ENCODE measurements at regions of chr4 and their contacts with region 1.

Region 1: DNA sequence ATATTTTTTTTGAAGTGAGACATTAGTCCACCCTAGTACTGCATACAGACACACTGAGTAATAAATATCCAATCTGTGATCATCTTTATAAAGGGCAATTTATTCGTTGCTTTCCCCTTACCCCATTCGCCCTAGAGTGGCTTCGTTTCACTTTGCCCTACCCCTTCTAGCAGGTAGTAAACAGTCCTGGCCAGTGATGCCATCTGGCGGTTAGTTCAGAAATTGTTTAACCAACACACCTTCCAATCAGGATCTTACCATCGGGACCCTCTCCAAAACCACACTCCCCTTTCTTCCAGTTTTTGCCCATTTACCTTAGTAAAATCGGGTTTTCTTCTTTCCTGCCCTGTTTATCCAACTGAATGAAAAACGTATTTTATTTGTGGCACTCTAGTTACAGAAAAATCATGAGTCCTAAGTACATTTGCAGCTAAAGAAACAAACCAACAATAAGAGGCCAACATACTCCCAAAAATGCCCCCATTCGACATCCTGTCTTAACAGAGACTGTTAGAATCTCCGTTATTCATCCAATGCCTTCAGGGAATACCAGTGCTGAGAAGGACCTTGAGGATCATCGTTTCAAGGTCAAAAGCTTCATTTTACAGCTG is 2.2 kb downstream of the PPA2 start:
- DNase-seq: peak; percentile 64
- H3K4me3 Mint-ChIP-seq: peak overlapping the region; percentile 78
- H3K27ac Mint-ChIP-seq: no peak overlapping the region
- H3K4me1 Mint-ChIP-seq: peaks cover 49% of the 10 kb centered on the region
- H3K27me3 Mint-ChIP-seq: peaks cover 2% of the 10 kb centered on the region

Region 2: GRCh38 chr4:104860238-104861123 is 611.2 kb before region 1 on chr4:
- intact Hi-C with region 1: loop called (anchors 5 kb)
- DNase-seq: peak; percentile 33
- H3K4me3 Mint-ChIP-seq: no peak overlapping the region
- H3K27ac Mint-ChIP-seq: no peak overlapping the region
- H3K4me1 Mint-ChIP-seq: no peaks in the 10 kb centered on the region
- H3K27me3 Mint-ChIP-seq: peaks cover 14% of the 10 kb centered on the region

Region 3: DNA sequence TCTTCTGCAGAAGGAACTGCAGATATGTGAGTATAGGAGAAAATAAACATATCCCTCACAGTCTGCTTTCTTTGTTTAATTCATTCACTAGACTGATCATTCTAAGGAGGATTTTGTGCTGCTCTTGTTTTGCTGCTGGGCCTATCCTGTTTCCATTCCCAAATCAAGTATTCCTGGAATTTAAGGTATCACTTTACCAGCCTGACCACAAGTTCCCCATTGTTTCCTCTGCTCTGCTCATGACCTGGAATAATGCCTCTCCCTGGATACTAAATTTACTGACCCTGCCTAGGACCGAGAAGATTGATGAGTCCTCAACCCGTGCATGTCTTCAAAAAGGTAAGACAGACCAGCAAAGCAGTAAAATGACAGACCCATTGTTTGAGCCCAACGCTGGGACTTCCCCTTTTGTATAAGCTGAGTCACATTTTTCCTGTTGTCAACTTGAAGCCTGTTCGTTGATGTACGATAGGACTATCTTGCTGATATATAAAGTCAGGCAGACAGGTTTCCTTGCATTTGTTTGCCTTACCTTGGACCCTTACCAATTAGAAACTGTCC is 410.5 kb before region 1 on chr4:
- intact Hi-C with region 1: loop called (anchors 1 kb)
- DNase-seq: peak; percentile 35
- H3K4me3 Mint-ChIP-seq: peak overlapping the region; percentile 17
- H3K27ac Mint-ChIP-seq: peak overlapping the region; percentile 93
- H3K4me1 Mint-ChIP-seq: peaks cover 55% of the 10 kb centered on the region
- H3K27me3 Mint-ChIP-seq: no peaks in the 10 kb centered on the region

Region 4: DNA sequence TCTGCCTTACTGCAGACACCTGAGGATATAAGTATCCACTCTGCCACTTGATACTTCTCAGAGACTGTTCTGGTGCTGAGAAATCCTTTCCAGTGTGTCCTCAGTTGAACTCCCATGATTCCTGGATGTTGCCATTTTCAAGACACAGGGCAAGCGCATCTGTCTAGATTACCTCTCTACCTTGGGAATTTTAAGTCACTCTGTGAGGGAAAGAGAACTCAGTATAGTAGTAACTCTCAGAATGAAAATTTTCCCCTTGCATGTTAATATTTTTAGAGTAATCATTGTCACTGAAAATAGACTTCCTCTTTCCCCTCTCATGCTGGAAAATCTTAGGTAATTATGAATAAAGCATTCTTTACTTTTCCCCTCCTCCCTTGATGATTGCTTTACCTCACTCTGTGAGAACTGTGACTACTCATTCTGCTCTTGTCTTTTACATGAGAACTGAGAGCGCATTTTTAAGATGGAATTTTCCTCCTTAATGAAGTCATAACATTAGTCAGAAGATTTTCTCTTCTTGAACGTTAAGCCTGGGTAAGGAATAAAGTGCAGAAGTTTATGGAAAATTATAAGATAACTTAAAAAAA is 280.0 kb before region 1 on chr4:
- intact Hi-C with region 1: loop called (anchors 1 kb)
- DNase-seq: no peak
- H3K4me3 Mint-ChIP-seq: peak overlapping the region; percentile 8
- H3K27ac Mint-ChIP-seq: peak overlapping the region; percentile 74
- H3K4me1 Mint-ChIP-seq: peaks cover 53% of the 10 kb centered on the region
- H3K27me3 Mint-ChIP-seq: no peaks in the 10 kb centered on the region

Region 5: GRCh38 chr4:105306158-105306781 is 165.4 kb before region 1 on chr4:
- intact Hi-C with region 1: loop called (anchors 1 kb)
- DNase-seq: peak; percentile 60
- H3K4me3 Mint-ChIP-seq: peak overlapping the region; percentile 41
- H3K27ac Mint-ChIP-seq: peak overlapping the region; percentile 92
- H3K4me1 Mint-ChIP-seq: peaks cover 25% of the 10 kb centered on the region
- H3K27me3 Mint-ChIP-seq: no peaks in the 10 kb centered on the region

Region 6: DNA sequence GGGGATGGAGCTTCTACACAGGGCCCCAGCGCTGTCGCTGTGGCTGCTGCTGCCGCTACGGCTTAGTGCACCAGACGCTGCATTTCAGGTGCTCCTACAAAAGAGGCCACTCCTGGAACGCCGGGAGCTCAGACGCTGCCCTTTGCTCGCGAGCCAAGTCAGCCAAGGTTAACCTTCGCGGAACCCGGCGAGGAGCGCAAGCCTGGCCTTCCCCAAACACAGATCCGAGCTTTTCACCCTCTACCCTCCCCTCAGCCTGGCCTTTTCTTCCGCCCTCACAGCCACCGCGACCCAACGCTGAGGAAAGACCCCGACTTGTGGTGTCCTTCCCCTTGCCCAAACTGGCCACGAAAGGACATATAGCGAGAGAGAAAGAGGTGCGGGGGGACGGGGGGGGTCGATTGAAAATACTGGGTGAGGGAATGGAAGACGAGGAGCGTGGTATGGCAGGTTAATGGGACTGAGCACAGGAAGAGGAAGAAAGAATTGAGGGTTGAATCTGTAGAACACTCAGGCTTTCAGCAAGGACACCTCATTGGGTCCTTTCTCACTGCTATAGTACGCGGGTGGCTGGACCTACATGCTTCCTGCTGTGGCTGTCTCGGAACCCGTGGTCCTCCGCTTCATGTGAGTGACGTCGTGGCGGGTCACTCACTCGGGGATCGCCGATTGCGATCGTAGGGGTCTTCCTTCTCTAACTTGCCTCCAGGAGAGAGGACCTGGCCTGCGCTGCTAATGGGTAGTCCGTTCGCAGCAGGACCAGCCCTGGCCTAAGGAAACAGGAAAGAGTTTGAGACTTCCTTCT is 844.5 kb after region 1 on chr4 and contains the starts of genes AIMP1 and TBCK:
- intact Hi-C with region 1: loop called (anchors 1 kb)
- DNase-seq: peak; percentile 83
- H3K4me3 Mint-ChIP-seq: no peak within 1 kb of the TSS
- H3K27ac Mint-ChIP-seq: no peak within 1 kb of the TSS
- H3K4me1 Mint-ChIP-seq: peaks cover 30% of the 10 kb centered on the region
- H3K27me3 Mint-ChIP-seq: no peaks in the 10 kb centered on the region
- total RNA-seq, gene AIMP1: 86.4 and 86.9 TPM in 2 replicates
- total RNA-seq, gene TBCK: 24.4 and 25.1 TPM in 2 replicates

Measured in activated T-helper 1 cell treated with anti-CD3 and anti-CD28 coated beads, Interleukin-12 subunit alpha, Interleukin-12 subunit beta, Interleukin-2, Interleukin-4 antibody, amounts not matched to agents 30 ng/mL and 10 ng/mL and 1 ng/mL, durations not matched to agents 14 hours and 24 hours and 36 hours (primary cell).